ENCODE measurements at regions of chr20 and their contacts with region 1.

Region 1: DNA sequence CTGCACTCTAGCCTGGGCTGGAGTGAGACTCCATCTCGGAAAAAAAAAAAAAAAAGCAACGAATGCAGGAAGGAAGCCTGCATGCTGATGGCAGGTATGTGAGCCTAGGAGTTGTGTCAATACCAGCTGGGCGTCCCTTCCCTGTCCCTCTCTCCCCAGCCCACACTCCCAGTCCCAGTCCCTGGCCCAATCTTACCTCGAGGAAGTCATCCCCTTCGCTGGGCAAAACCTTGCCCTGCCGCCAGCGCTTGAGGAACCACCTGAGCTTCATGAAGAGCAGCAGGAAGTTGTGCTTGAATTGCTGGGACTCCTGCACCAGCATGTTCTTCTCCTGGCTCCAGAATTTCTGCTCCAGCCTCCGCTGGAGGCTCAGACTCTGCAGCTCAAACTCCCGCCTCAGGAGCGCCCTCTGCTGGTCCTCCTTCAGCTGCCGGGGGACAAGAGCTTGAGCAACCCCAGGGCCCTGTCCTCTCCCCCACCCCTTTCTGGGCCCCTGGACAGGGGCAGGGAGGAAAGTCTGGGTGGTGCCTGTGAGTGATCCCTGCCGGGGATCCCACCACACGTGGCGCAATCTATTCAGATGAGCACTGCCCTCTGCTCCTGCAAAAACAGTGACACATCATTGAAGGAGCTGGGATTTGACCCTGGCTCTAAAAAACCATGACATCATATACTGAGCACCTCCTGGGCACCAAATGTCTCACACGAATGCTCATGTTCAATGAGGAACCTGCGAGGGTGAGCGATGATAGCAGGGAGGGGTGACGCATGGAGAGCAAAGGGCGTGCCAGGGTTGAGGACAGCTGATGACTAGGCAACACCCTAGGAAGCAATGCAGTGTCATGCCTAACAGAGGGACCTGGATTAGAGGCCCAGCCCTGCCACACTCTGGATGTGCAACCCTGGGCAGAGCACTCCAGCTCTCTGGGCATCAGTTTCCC is 35.0 kb upstream of the DSN1 start:
- DNase-seq: peak; percentile 29 to 93
- H3K4me3 ChIP-seq: no peak overlapping the region
- H3K27ac ChIP-seq: no peak overlapping the region
- H3K4me1 ChIP-seq: no peaks in the 10 kb centered on the region
- H3K27me3 ChIP-seq: no peaks in the 10 kb centered on the region
- CTCF ChIP-seq: peak; percentile 82 to 84 (median 83)
- EP300 ChIP-seq: no peak
- POLR2A ChIP-seq: no peak
- RAD21 ChIP-seq: peak; percentile 50 to 63; a peak in 3 of 4 replicates

Region 2: GRCh38 chr20:36792422-36792821 is 16.2 kb before region 1 on chr20:
- CTCF ChIA-PET with region 1: interaction called, 44 read pairs
- POLR2A ChIA-PET with region 1: no interaction called
- DNase-seq: peak in 1 of 2 experiments; percentile 56
- H3K4me3 ChIP-seq: no peak overlapping the region
- H3K27ac ChIP-seq: no peak overlapping the region
- H3K4me1 ChIP-seq: no peaks in the 10 kb centered on the region
- H3K27me3 ChIP-seq: no peaks in the 10 kb centered on the region
- CTCF ChIP-seq: peak; percentile 60 to 65 (median 62)
- EP300 ChIP-seq: no peak
- POLR2A ChIP-seq: no peak
- RAD21 ChIP-seq: peak; percentile 48 to 55; a peak in 3 of 4 replicates

Region 3: DNA sequence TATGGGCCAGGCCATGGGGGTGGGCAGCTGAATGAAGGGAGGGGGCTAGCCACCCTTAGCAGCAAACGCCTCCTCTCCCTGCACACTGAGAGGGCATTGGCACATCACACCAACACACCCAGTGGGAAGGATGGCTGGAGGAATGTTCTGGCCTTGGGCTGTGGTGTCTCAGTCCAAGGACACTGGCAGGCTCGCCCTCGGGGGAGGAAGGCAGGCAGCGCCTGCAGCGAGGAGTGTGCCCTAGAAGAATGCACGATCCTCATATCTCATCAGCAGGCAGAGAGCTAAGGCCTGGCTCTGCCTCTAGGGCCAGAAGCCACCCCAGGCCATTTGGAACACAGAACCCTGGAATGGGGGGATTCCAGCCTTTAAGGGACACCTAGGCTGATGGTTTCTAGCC is 19.3 kb after region 1 on chr20:
- CTCF ChIA-PET with region 1: interaction called, 27 read pairs
- POLR2A ChIA-PET with region 1: no interaction called
- DNase-seq: no peak
- H3K4me3 ChIP-seq: no peak overlapping the region
- H3K27ac ChIP-seq: no peak overlapping the region
- H3K4me1 ChIP-seq: no peaks in the 10 kb centered on the region
- H3K27me3 ChIP-seq: no peaks in the 10 kb centered on the region
- CTCF ChIP-seq: no peak
- EP300 ChIP-seq: no peak
- POLR2A ChIP-seq: no peak
- RAD21 ChIP-seq: no peak

Region 4: GRCh38 chr20:36847009-36847709 is 38.6 kb after region 1 on chr20:
- CTCF ChIA-PET with region 1: interaction called, 16 read pairs
- POLR2A ChIA-PET with region 1: interaction called, 3 read pairs
- DNase-seq: no peak
- H3K4me3 ChIP-seq: no peak overlapping the region
- H3K27ac ChIP-seq: no peak overlapping the region
- H3K4me1 ChIP-seq: peaks cover 0 to 7% (median 4%) of the 10 kb centered on the region in 4 experiments; a peak in 4 of 7 replicates
- H3K27me3 ChIP-seq: no peaks in the 10 kb centered on the region
- CTCF ChIP-seq: no peak
- EP300 ChIP-seq: no peak
- POLR2A ChIP-seq: no peak
- RAD21 ChIP-seq: no peak

Region 5: GRCh38 chr20:36861875-36862801 is 53.6 kb after region 1 on chr20:
- CTCF ChIA-PET with region 1: interaction called, 15 read pairs
- POLR2A ChIA-PET with region 1: interaction called, 3 read pairs
- DNase-seq: peak in 1 of 2 experiments; percentile 61
- H3K4me3 ChIP-seq: peak overlapping the region; percentile 44 to 70 (median 50)
- H3K27ac ChIP-seq: no peak overlapping the region
- H3K4me1 ChIP-seq: peaks cover 3 to 23% (median 17%) of the 10 kb centered on the region in 4 experiments
- H3K27me3 ChIP-seq: peaks cover 0 to 10% (median 6%) of the 10 kb centered on the region in 4 experiments; a peak in 4 of 7 replicates
- CTCF ChIP-seq: no peak
- EP300 ChIP-seq: no peak
- POLR2A ChIP-seq: peak in 1 of 2 experiments; percentile 54; a peak in 2 of 3 replicates
- RAD21 ChIP-seq: no peak